ENCODE measurements at regions of chr10 and their contacts with region 1.

Region 1: GRCh38 chr10:104580774-104581675 is 60.1 kb upstream of the SORCS3 start:
- DNase-seq: peak; percentile 43
- ATAC-seq: peak; percentile 95
- H3K4me3 ChIP-seq: no peak overlapping the region
- H3K27ac ChIP-seq: no peak overlapping the region
- H3K4me1 ChIP-seq: 0 out of 2 replicates have a peak, but pooled peaks cover 6% of the 10 kb centered on the region
- H3K27me3 ChIP-seq: peaks cover 0 to 25% of the 10 kb centered on the region in 2 experiments; a peak in 2 of 5 replicates
- CTCF ChIP-seq: peak; percentile 82
- EP300 ChIP-seq: no peak
- POLR2A ChIP-seq: no peak
- RAD21 ChIP-seq: no peak

Region 2: DNA sequence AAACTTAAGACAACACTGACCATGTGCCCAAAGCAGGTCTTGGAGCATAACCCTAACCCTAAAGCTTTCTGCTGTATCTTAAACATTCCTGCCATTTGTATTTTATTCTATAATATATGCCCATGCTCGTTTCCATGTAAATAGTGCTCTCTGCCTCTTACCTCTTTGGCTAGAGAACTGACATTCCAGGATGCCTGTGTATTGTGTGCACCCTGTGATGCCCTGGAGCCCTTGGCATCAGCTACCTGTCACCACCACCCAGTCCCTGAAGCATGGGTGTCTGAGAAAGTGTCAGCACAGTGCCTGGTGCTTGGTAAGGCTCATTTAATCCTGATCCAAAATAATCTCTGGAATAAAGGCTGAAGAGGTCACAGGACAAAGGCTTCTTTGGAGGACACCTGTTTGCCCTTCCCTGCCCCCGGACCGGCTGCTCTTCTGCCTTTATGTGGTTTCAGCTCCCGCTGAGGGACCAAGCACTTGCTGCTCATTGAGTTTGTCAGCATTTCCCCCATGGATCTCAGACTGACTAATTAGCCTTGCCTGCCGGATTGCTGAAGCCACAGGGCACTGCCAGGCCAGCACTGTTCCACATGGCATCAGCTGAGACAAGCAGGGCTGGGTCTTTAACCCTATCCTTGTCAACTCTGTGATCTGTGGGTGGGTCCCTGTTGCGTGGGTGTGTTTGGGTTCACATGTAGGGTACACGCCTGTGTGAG is 79.0 kb before region 1 on chr10:
- CTCF ChIA-PET with region 1: no interaction called
- POLR2A ChIA-PET with region 1: no interaction called
- in situ Hi-C with region 1: no loop called
- intact Hi-C with region 1: no loop called
- DNase-seq: no peak
- ATAC-seq: no peak
- H3K4me3 ChIP-seq: no peak overlapping the region
- H3K27ac ChIP-seq: no peak overlapping the region
- H3K4me1 ChIP-seq: no peaks in the 10 kb centered on the region
- H3K27me3 ChIP-seq: 0 out of 5 replicates have a peak, but pooled peaks cover 0 to 16% of the 10 kb centered on the region in 2 experiments
- CTCF ChIP-seq: no peak
- EP300 ChIP-seq: no peak
- POLR2A ChIP-seq: no peak
- RAD21 ChIP-seq: no peak

Region 3: DNA sequence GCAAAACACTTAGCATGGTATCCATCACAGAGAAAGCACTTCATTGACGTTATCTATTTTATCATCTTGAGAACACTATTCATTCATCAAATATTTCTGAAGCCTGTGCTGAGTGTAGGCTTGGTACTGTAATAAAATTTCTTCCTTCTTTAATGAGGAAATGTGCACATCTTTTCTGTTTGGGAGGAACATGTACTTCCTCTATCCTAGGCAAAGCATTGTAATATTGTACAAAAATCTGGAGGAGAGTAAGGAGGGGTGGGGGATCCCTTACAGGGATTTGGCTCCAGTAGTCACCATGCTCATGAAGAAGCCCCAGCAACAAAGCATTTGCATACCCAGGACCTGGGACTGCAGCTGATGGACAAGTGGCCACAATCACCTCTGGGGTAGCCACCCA is 20.1 kb after region 1 on chr10:
- CTCF ChIA-PET with region 1: no interaction called
- POLR2A ChIA-PET with region 1: no interaction called
- in situ Hi-C with region 1: no loop called
- intact Hi-C with region 1: no loop called
- DNase-seq: no peak
- ATAC-seq: no peak
- H3K4me3 ChIP-seq: no peak overlapping the region
- H3K27ac ChIP-seq: no peak overlapping the region
- H3K4me1 ChIP-seq: no peaks in the 10 kb centered on the region
- H3K27me3 ChIP-seq: peaks cover 0 to 5% of the 10 kb centered on the region in 2 experiments; a peak in 1 of 5 replicates
- CTCF ChIP-seq: no peak
- EP300 ChIP-seq: no peak
- POLR2A ChIP-seq: no peak
- RAD21 ChIP-seq: no peak

Region 4: DNA sequence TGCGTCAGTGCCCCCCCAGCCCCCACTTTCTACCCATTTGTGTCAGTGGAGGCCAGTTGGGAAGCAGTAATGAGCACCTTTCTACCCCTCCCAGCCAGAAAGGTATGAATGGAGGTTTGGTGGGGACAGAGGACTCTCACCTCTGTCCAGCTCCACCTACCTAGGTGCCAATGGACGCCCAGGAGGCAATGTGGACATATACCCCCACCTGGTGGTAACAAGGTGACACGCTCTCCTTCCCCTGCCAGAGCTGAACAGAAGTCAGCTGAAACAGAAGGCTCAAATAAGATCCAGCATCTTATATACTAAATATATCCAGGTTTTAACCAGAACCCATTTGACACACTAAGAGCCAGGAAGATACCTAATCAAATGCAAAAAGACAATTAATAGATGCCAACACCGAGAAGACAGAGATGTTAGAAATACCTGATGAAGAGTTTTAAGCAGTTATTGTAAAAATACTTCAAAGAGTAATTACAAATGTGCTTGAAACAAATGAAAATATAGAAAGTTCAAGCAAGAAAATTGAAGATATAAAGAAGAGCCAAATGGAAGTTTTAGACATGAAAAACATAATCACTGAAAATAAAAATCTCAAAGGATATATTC is 41.7 kb after region 1 on chr10:
- CTCF ChIA-PET with region 1: interaction called, 6 read pairs
- POLR2A ChIA-PET with region 1: no interaction called
- in situ Hi-C with region 1: loop called (anchors 5 kb)
- intact Hi-C with region 1: loop called (anchors 2 kb)
- DNase-seq: peak; percentile 16
- ATAC-seq: peak; percentile 91
- H3K4me3 ChIP-seq: no peak overlapping the region
- H3K27ac ChIP-seq: no peak overlapping the region
- H3K4me1 ChIP-seq: no peaks in the 10 kb centered on the region
- H3K27me3 ChIP-seq: no peaks in the 10 kb centered on the region
- CTCF ChIP-seq: peak; percentile 75
- EP300 ChIP-seq: no peak
- POLR2A ChIP-seq: no peak
- RAD21 ChIP-seq: peak; percentile 30; the same call in 1 of the 2 replicates